Activated CD4-positive, alpha-beta T cell treated with anti-CD3 and anti-CD28 coated beads, Interleukin-2, amount 10 ng/mL, durations not matched to agents 24 days and 14 days (primary cell): ENCODE measurements at regions of chr11 and their contacts with region 1.

Region 1: GRCh38 chr11:15113381-15113780 is 1.3 kb upstream of the INSC start:
- DNase-seq: peak; percentile 67
- H3K4me3 Mint-ChIP-seq: no peak overlapping the region
- H3K27ac Mint-ChIP-seq: no peak overlapping the region
- H3K4me1 Mint-ChIP-seq: peaks cover 28% of the 10 kb centered on the region
- H3K27me3 Mint-ChIP-seq: peaks cover 27% of the 10 kb centered on the region

Region 2: DNA sequence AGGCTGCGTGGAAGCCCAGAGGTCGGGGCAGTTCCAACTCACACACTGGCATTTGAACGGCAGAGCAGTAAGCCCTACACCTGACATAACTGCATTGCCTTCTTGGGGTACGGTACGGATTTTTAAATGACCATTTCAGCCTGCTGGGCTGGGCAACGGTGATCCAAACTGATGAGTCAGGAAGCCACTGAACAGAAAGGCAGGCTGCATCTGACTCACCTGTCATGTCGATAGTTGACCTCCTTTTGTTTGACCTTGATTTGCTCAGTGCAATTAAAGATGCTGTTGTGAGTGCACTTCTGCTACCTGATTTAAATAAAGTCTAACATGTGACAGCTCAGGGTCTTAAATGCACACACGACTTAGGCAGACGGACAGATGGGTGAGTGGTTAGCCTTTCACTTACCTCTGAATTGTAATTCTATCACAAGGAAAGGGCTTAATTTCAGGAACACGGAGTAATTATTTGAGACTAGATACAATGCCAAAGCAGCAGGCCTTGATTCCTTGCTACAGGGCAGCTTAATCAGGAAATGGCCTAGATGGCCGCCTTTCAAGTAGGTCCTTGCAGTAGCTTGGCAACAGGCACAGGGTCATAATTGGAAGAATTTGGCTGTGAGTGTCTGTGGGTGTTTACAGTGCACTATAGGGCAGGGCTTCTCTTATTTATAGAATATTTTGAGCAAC is 1783.6 kb before region 1 on chr11:
- intact Hi-C with region 1: loop called (anchors 10 kb)
- DNase-seq: no peak
- H3K4me3 Mint-ChIP-seq: no peak overlapping the region
- H3K27ac Mint-ChIP-seq: no peak overlapping the region
- H3K4me1 Mint-ChIP-seq: peaks cover 23% of the 10 kb centered on the region
- H3K27me3 Mint-ChIP-seq: no peaks in the 10 kb centered on the region

Region 3: DNA sequence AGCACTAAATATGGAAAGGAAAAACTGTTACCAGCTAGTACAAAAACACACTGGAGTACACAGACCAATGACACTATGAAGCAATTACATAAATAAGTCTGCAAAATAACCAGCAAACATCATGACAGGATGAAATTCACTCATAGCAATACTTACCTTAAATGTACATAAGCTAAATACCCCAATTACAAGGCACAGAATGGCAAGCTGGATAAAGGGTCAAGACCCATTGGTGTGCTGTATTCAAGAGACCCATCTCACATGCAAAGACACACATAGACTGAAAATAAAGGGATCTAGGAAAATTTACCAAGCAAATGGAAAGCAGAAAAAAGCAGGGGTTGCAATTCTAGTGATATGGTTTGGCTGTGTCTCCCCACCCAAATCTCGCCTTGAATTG is 97.2 kb before region 1 on chr11:
- intact Hi-C with region 1: no loop called
- DNase-seq: no peak
- H3K4me3 Mint-ChIP-seq: no peak overlapping the region
- H3K27ac Mint-ChIP-seq: no peak overlapping the region
- H3K4me1 Mint-ChIP-seq: no peaks in the 10 kb centered on the region
- H3K27me3 Mint-ChIP-seq: peaks cover 27% of the 10 kb centered on the region

Region 4: DNA sequence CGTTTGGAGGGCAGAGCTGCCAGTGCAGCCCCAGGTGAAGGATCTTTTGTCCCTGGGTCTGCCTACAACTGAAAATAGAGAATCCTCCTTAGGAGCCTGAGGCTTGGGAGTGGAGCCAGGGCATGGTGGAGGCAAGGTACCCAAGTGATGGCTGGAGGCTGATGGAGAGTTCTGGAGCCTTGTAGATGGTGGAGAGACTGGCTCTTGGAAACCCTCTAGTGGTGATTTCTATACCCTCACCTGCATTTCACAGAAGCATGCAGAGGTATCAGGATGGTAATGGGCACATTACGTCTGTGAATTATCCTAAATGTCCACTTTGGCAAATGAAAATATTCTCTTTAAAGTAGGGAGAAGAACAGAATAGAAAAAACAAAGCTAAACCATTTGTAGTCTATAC is 45.7 kb after region 1 on chr11:
- intact Hi-C with region 1: loop called (anchors 5 kb)
- DNase-seq: peak; percentile 61
- H3K4me3 Mint-ChIP-seq: no peak overlapping the region
- H3K27ac Mint-ChIP-seq: no peak overlapping the region
- H3K4me1 Mint-ChIP-seq: no peaks in the 10 kb centered on the region
- H3K27me3 Mint-ChIP-seq: peaks cover 21% of the 10 kb centered on the region